CD4-positive, alpha-beta T cell (primary cell): ENCODE measurements at regions of chr1 and their contacts with region 1.

Region 1: DNA sequence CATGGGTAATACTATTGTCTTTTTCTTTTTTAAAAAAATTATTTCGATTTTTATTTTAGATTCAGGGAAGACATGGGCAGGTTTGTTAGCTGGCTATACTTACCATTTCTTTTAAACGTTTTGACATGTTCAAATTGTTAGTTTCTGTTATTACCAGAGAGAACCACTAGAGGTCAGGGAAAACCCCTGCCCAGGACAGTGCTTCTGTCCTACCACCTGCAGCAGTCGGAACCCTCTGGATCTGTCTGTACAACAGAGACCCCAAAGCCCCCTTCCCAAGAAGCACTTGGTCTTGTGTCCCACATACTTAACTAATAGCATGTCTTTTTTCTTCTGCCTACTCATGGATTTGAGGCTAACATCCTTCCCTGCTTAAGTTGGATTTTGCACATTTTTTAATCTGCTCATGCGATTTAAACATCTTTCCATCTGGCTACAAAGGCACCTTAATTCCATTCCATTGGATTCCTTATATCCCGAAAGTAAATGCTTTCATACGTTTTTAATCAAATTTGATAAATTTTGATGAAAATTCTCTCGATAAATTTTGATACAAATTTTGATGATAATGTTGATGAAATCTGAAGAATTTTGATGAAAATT is 10.0 kb upstream of the C1orf115 start:
- DNase-seq: peak in 4 of 14 experiments; percentile 22 to 58 (median 47)
- ATAC-seq: peak; percentile 66
- H3K4me3 ChIP-seq: no peak overlapping the region
- H3K4me3 Mint-ChIP-seq: no peak overlapping the region
- H3K27ac ChIP-seq: no peak overlapping the region
- H3K27ac Mint-ChIP-seq: no peak overlapping the region
- H3K4me1 ChIP-seq: no peaks in the 10 kb centered on the region
- H3K4me1 Mint-ChIP-seq: no peaks in the 10 kb centered on the region
- H3K27me3 ChIP-seq: no peaks in the 10 kb centered on the region
- H3K27me3 Mint-ChIP-seq: no peaks in the 10 kb centered on the region
- CTCF ChIP-seq: peak; percentile 63

Region 2: GRCh38 chr1:220616836-220617235 is 63.4 kb before region 1 on chr1:
- CTCF ChIA-PET with region 1: no interaction called
- POLR2A ChIA-PET with region 1: no interaction called
- intact Hi-C with region 1: no loop called
- DNase-seq: no peak
- ATAC-seq: no peak
- H3K4me3 ChIP-seq: no peak overlapping the region
- H3K4me3 Mint-ChIP-seq: no peak overlapping the region
- H3K27ac ChIP-seq: no peak overlapping the region
- H3K27ac Mint-ChIP-seq: no peak overlapping the region
- H3K4me1 ChIP-seq: no peaks in the 10 kb centered on the region
- H3K4me1 Mint-ChIP-seq: no peaks in the 10 kb centered on the region
- H3K27me3 ChIP-seq: no peaks in the 10 kb centered on the region
- H3K27me3 Mint-ChIP-seq: peaks cover 20% of the 10 kb centered on the region
- CTCF ChIP-seq: no peak

Region 3: DNA sequence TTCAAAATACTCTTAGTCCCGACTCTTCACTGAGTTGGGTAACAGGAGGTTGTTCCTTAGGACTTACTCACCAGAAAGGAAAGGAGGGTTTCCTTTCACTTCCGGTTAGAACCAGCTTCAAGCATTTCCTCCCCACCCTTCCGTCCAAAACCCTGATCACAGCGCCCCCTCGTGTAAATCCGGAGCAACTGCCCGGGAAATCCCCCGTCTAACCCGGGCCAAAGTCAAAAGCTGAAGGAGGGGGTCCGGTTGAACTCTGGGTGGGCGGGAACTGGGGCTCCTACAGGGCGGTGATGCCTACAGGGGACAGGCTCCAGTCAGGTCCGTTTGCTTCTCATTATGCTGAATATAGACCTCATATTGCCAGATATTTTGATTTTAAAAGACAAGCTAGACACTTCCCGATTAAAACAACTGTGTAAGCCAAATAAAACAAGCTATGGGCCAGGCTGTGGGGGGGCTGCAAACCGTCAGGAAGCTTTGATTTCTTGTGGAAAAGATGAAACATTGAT is 53.0 kb after region 1 on chr1:
- CTCF ChIA-PET with region 1: interaction called, 3 read pairs
- POLR2A ChIA-PET with region 1: interaction called, 3 read pairs
- intact Hi-C with region 1: loop called (anchors 1 to 2 kb)
- DNase-seq: peak; percentile 55 to 86 (median 67)
- ATAC-seq: peak; percentile 94
- H3K4me3 ChIP-seq: peak overlapping the region; percentile 11
- H3K4me3 Mint-ChIP-seq: peak overlapping the region; percentile 26
- H3K27ac ChIP-seq: no peak overlapping the region
- H3K27ac Mint-ChIP-seq: peak overlapping the region; percentile 23
- H3K4me1 ChIP-seq: peaks cover 12% of the 10 kb centered on the region
- H3K4me1 Mint-ChIP-seq: peaks cover 15% of the 10 kb centered on the region
- H3K27me3 ChIP-seq: no peaks in the 10 kb centered on the region
- H3K27me3 Mint-ChIP-seq: no peaks in the 10 kb centered on the region
- CTCF ChIP-seq: peak; percentile 77